Activated CD4-positive, alpha-beta T cell treated with anti-CD3 and anti-CD28 coated beads for 36 hours (primary cell): ENCODE measurements at regions of chr7 and their contacts with region 1.

Region 1: DNA sequence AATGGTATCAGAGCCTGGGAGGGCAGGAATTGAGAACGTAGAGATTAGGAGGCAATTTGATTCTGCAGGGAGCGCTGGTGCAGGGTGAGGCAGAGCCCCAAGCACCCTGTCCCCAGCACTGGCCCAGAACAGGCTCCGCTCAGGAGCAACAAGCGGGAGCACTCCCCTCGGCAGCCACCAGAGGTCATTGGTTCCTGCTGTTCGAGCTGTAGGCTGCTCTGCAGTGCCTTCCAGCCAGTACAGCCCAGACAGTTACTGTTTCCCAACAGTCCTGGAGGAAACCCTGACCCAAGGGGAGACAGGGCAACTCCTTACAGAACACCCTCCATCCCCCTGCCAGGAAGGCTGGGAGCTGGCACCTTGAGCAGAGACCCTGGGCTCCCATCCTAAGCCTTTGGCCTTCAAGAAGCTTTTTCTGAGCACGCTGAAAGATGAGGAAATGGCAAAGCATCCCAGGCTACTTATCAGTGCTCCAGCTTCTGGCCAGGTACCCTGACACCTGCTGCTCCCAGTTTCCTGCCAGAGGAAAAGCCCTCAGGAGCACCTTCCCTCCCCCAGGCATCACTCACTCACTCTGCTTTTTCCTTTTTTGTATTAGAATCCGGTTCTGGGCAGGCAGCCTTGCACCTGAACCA is 71.2 kb upstream of the EFCAB10 start:
- DNase-seq: peak; percentile 86
- ATAC-seq: peak; percentile 90
- H3K4me3 Mint-ChIP-seq: no peak overlapping the region
- H3K27ac Mint-ChIP-seq: no peak overlapping the region
- H3K4me1 Mint-ChIP-seq: peaks cover 14% of the 10 kb centered on the region
- H3K27me3 Mint-ChIP-seq: no peaks in the 10 kb centered on the region

Region 2: DNA sequence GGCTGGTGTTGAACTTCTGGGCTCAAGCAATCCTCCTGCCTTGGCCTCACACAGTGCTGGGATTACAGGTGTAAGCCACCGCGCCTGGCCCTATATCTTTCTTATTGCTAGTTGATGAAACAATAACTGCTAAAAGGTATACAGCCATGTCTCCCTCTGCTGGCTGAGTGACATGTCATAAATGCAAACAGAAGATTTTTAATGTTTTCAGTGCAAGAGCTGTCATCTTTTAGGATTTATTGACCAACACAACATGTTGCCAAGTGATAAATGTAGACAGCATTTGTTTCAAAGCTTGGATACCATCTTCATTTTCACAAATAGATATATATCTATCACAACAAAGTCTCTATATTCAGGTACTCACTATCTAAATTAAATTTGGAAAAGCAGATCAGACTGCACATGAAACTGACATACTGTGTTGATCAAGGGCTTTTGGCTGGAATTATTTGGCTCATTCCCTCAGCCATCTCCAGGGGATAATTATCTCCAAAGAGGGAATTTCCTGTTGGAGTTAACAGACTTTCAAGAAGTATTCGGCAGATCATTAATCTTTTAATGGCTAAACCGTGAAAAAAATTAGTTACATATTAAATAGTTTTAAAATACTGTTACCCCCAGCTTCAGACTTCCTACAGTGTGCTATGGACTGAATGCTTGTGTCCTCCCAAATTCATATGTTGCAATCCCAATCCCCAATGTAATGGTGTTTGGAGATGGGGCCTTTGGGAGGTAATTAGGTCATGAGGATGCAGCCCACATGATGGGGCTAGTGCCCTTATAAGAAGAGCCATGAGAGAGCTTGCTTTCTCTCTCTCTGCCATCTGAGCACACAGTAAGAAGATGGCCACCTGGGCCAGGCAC is 222.5 kb before region 1 on chr7:
- CTCF ChIA-PET with region 1: no interaction called
- POLR2A ChIA-PET with region 1: no interaction called
- intact Hi-C with region 1: no loop called
- DNase-seq: peak; percentile 74
- ATAC-seq: no peak
- H3K4me3 Mint-ChIP-seq: no peak overlapping the region
- H3K27ac Mint-ChIP-seq: no peak overlapping the region
- H3K4me1 Mint-ChIP-seq: peaks cover 19% of the 10 kb centered on the region
- H3K27me3 Mint-ChIP-seq: no peaks in the 10 kb centered on the region

Region 3: DNA sequence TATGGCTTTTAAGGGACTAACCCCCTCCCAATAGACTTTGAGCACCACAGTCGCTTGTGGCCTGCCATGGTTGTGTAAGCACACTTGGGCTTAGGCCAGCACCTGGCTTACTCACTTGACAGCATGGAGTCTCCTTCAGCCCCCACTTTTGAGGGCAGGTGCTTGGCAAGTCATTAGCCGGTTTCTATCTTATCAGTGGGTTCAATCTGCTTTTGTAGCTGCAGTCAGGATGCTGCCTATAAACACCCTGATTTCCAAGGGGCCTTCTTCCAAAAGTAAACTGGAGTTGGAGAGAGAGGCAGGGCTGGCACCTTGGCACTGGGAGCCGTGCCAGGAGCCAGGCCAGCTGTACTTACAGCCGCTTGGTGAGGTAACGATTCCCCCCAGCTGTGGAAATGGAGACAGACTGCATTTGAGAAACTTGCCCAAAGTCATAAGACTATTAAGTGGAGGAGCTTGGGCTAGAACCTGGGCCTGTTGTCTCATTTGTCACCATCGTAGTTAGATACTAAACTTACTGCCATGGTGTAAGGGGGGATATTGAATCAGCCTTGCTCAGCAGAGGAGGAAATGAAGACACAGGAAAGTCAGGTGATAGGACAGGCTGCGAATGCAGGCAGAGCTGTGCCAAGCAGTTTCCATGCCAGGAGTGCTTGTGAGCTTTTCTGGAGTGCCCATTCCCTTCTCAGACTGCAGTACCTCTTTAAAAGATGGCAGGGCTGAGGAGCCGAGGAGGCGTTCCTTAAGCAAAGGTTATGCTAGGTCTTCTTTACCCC is 21.1 kb after region 1 on chr7:
- CTCF ChIA-PET with region 1: interaction called, 20 read pairs
- POLR2A ChIA-PET with region 1: no interaction called
- intact Hi-C with region 1: no loop called
- DNase-seq: peak; percentile 34
- ATAC-seq: no peak
- H3K4me3 Mint-ChIP-seq: no peak overlapping the region
- H3K27ac Mint-ChIP-seq: peak overlapping the region; percentile 77
- H3K4me1 Mint-ChIP-seq: peaks cover 61% of the 10 kb centered on the region
- H3K27me3 Mint-ChIP-seq: no peaks in the 10 kb centered on the region

Region 4: DNA sequence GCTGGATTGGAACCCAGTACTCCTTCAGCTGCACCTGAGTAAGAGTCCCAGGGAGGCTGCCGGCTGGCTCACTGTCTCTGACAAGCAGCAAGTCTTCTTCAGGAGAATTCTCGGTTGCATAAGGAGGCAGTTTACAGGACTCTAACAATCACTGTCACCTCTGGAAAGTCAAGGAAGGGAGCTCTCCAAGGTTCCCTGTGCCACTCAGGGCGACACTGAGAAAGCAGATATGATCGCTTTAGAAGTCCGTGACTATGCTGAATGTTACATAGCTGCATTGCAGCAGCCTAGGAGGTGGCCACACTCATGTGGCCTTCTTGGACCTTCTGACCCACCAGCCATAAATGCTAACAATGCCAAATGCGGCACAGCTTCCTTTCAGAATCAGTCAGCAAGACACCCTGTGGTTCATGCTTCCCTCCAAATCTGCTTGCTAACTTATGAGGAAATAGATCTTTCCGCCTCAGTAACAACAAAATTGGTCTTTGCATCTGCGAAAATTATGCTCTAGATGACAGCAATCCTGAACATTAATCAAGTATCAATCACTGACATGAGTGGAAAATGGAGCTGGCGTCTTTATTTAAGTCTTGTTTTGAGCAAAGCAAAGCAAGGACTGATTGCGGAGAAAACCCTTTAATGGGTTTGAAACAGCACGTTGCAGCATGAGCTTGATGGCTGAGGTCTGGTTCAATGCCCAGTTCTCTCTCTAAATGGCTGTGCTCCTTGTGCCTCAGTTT is 91.0 kb after region 1 on chr7:
- CTCF ChIA-PET with region 1: interaction called, 17 read pairs
- POLR2A ChIA-PET with region 1: no interaction called
- intact Hi-C with region 1: no loop called
- DNase-seq: no peak
- ATAC-seq: no peak
- H3K4me3 Mint-ChIP-seq: no peak overlapping the region
- H3K27ac Mint-ChIP-seq: no peak overlapping the region
- H3K4me1 Mint-ChIP-seq: peaks cover 3% of the 10 kb centered on the region
- H3K27me3 Mint-ChIP-seq: no peaks in the 10 kb centered on the region

Region 5: GRCh38 chr7:106009403-106010226 is 357.1 kb after region 1 on chr7:
- CTCF ChIA-PET with region 1: interaction called, 6 read pairs
- POLR2A ChIA-PET with region 1: no interaction called
- intact Hi-C with region 1: loop called in 1 of 2 experiments (anchors 1 kb)
- DNase-seq: peak; percentile 92
- ATAC-seq: peak; percentile 99
- H3K4me3 Mint-ChIP-seq: no peak overlapping the region
- H3K27ac Mint-ChIP-seq: peak overlapping the region; percentile 4
- H3K4me1 Mint-ChIP-seq: peaks cover 21% of the 10 kb centered on the region
- H3K27me3 Mint-ChIP-seq: peaks cover 2% of the 10 kb centered on the region

Region 6: DNA sequence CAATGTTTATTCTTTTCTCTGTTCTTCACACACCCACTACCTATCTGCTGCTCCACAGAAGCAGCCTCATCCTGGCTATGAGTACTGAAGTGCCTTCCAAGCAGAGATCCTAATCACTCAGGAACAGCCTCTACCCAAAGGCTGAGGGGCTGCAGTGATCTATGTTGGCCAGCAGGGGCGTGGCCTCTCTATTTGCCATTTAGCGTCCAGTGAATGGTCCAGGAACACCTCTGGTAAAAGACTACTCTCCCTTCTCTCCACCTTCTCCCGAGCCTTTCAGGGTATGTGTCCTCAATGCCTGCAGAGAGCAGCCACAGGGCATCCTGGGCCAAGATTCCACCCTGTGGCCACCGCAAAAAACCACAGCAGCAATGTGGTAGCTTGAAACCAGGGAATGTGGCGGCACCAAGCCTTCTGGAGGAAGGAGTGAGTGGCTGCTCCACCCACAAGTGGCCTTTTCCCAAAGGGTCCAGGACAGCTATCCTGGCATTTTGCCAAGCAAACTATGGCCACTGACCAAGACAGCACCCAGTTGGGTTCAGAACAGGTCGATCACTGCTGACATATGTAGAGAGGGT is 388.8 kb after region 1 on chr7:
- CTCF ChIA-PET with region 1: interaction called, 47 read pairs
- POLR2A ChIA-PET with region 1: no interaction called
- intact Hi-C with region 1: loop called (anchors 1 kb)
- DNase-seq: peak; percentile 59
- ATAC-seq: peak; percentile 42
- H3K4me3 Mint-ChIP-seq: no peak overlapping the region
- H3K27ac Mint-ChIP-seq: no peak overlapping the region
- H3K4me1 Mint-ChIP-seq: peaks cover 31% of the 10 kb centered on the region
- H3K27me3 Mint-ChIP-seq: no peaks in the 10 kb centered on the region

Region 7: GRCh38 chr7:106239404-106239803 is 586.9 kb after region 1 on chr7:
- CTCF ChIA-PET with region 1: no interaction called
- POLR2A ChIA-PET with region 1: no interaction called
- intact Hi-C with region 1: no loop called
- DNase-seq: no peak
- ATAC-seq: no peak
- H3K4me3 Mint-ChIP-seq: no peak overlapping the region
- H3K27ac Mint-ChIP-seq: no peak overlapping the region
- H3K4me1 Mint-ChIP-seq: no peaks in the 10 kb centered on the region
- H3K27me3 Mint-ChIP-seq: no peaks in the 10 kb centered on the region